Ovary (tissue), 10 donors: ENCODE measurements at regions of chr2 and their contacts with region 1.

Region 1: DNA sequence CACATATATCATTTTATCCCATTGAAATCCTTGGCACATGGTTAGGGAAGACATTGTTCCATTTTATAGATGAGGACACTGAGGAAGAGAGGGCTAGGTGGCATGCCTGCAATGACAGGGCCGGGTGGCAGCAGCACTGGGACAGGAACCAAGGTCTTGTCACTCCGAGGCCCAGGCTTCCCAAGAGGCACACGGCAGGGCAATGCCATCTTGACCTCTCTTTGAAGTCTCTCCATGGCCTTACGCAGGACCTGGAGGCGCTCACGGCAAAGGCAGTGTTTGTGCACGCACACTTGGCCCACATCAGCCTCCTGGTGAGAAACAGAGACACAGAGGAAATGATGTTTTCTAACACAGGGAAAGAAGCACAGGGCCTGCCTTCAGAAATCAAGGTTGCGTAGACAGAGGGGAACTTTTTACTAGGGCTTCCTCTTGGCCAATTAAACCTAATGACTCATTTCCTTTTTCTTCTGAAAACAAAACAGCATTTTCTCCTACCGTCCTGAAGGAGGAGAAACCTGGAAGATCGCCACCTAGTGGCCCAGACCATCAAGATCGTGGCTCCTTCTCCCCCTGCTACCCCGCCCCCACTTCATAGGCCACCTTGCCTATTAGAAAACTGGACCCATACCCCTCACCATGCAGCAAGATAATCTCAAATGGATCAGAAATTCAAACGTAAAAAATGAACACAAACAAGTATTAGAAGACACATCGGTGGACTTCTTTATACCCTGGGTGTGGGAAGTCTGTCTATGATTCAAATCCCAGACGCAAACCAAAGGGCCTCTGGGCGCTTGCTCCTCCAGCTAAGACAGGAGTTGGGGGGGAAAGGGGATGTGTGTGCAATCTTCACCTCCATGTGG is 74.6 kb upstream of the SP3 start:
- DNase-seq: peak; percentile 86 to 94 (median 90)
- H3K4me3 ChIP-seq: no peak overlapping the region
- H3K27ac ChIP-seq: no peak overlapping the region
- H3K4me1 ChIP-seq: peaks cover 3% of the 10 kb centered on the region
- H3K27me3 ChIP-seq: no peaks in the 10 kb centered on the region
- CTCF ChIP-seq: peak; percentile 72 to 90 (median 82)
- EP300 ChIP-seq: no peak
- POLR2A ChIP-seq: no peak

Region 2: GRCh38 chr2:173734797-173735196 is 305.0 kb before region 1 on chr2:
- intact Hi-C with region 1: loop called in 1 of 4 experiments (anchors 5 kb)
- DNase-seq: no peak
- H3K4me3 ChIP-seq: no peak overlapping the region
- H3K27ac ChIP-seq: no peak overlapping the region
- H3K4me1 ChIP-seq: no peaks in the 10 kb centered on the region
- H3K27me3 ChIP-seq: no peaks in the 10 kb centered on the region
- CTCF ChIP-seq: no peak
- EP300 ChIP-seq: no peak
- POLR2A ChIP-seq: no peak

Region 3: DNA sequence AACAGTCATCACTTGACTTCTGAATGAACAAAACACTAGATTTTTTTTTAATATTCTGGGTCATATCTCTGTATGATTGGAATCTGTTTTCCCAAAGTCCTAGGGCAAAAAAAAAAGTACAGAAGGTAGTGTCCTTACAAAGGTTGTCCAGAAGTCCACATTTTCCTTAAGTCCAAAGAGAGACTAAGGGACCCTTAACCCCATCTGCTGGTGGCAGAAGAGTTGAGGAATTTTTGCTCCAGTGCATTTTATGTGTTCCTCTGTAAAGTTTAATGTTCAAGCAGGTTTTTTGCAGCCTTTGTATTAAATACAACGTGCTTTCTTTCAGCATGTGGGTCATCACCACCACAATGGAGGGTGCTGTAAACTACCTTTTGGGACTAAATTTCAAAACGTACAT is 290.5 kb before region 1 on chr2:
- intact Hi-C with region 1: loop called in 1 of 4 experiments (anchors 10 kb)
- DNase-seq: no peak
- H3K4me3 ChIP-seq: no peak overlapping the region
- H3K27ac ChIP-seq: no peak overlapping the region
- H3K4me1 ChIP-seq: no peaks in the 10 kb centered on the region
- H3K27me3 ChIP-seq: no peaks in the 10 kb centered on the region
- CTCF ChIP-seq: no peak
- EP300 ChIP-seq: no peak
- POLR2A ChIP-seq: no peak